K562 (cell line): ENCODE measurements at regions of chr20 and their contacts with region 1.

Region 1: GRCh38 chr20:35146920-35147574 is at the start of gene EDEM2:
- DNase-seq: peak; percentile 92 to 98 (median 94)
- ATAC-seq: peak; percentile 95
- H3K4me3 ChIP-seq: peak within 1 kb of the TSS; percentile 60
- H3K27ac ChIP-seq: peak within 1 kb of the TSS; percentile 74
- H3K4me1 ChIP-seq: peaks cover 14 to 15% of the 10 kb centered on the region in 2 experiments; a peak in 4 of 5 replicates
- H3K27me3 ChIP-seq: no peaks in the 10 kb centered on the region
- CTCF ChIP-seq: peak in 2 of 3 experiments; percentile 33 to 41; a peak in 4 of 6 replicates
- EP300 ChIP-seq: no peak; the same call in 1 of the 2 replicates
- POLR2A ChIP-seq: peak; percentile 84
- RAD21 ChIP-seq: peak in 1 of 2 experiments; percentile 36; a peak in 2 of 4 replicates
- polyA plus RNA-seq, gene EDEM2: 7.3 to 9.1 TPM

Region 2: DNA sequence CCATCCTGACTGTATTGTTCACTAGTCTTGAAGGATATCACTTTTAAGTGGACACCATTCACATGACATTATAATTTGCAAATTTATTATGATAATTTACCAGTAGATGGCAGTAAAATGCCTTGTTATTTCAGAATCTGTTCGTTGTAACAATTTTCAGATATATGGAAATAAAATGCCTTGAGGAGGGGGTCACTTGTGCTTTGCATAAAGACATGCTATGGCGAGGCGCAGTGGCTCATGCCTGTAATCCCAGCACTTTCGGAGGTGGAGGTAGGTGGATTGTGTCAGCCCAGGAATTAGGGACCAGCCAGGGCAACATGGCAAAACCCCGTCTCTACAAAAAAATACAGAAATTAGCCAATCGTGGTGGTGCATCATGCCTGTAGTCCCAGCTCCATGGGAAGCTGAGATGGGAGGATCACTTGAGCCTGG is 312.6 kb before region 1 on chr20:
- CTCF ChIA-PET with region 1: no interaction called
- POLR2A ChIA-PET with region 1: no interaction called
- in situ Hi-C with region 1: no loop called
- intact Hi-C with region 1: loop called (anchors 5 kb)
- DNase-seq: peak; percentile 28 to 43 (median 40)
- ATAC-seq: peak; percentile 71
- H3K4me3 ChIP-seq: no peak overlapping the region
- H3K27ac ChIP-seq: no peak overlapping the region
- H3K4me1 ChIP-seq: peaks cover 0 to 9% of the 10 kb centered on the region in 2 experiments; a peak in 3 of 5 replicates
- H3K27me3 ChIP-seq: no peaks in the 10 kb centered on the region
- CTCF ChIP-seq: peak in 2 of 3 experiments; percentile 48 to 57; a peak in 3 of 6 replicates
- EP300 ChIP-seq: no peak
- POLR2A ChIP-seq: no peak
- RAD21 ChIP-seq: peak; percentile 41 to 62

Region 3: GRCh38 chr20:35021063-35021462 is 126.0 kb before region 1 on chr20:
- CTCF ChIA-PET with region 1: no interaction called
- POLR2A ChIA-PET with region 1: no interaction called
- in situ Hi-C with region 1: no loop called
- intact Hi-C with region 1: no loop called
- DNase-seq: no peak
- ATAC-seq: no peak
- H3K4me3 ChIP-seq: no peak overlapping the region
- H3K27ac ChIP-seq: no peak overlapping the region
- H3K4me1 ChIP-seq: no peaks in the 10 kb centered on the region
- H3K27me3 ChIP-seq: no peaks in the 10 kb centered on the region
- CTCF ChIP-seq: no peak
- EP300 ChIP-seq: no peak
- POLR2A ChIP-seq: no peak
- RAD21 ChIP-seq: no peak

Region 4: GRCh38 chr20:35092524-35093266 is 54.4 kb before region 1 on chr20 and contains the start of gene TRPC4AP:
- CTCF ChIA-PET with region 1: interaction called, 4 read pairs
- POLR2A ChIA-PET with region 1: interaction called, 3 read pairs
- in situ Hi-C with region 1: no loop called
- intact Hi-C with region 1: loop called (anchors 2 kb)
- DNase-seq: peak; percentile 88 to 94 (median 88)
- ATAC-seq: peak; percentile 92
- H3K4me3 ChIP-seq: peak within 1 kb of the TSS; percentile 92
- H3K27ac ChIP-seq: peak within 1 kb of the TSS; percentile 93
- H3K4me1 ChIP-seq: peaks cover 15 to 18% of the 10 kb centered on the region in 2 experiments
- H3K27me3 ChIP-seq: no peaks in the 10 kb centered on the region
- CTCF ChIP-seq: peak; percentile 91 to 98 (median 96)
- EP300 ChIP-seq: peak; percentile 55
- POLR2A ChIP-seq: peak; percentile 88
- RAD21 ChIP-seq: peak; percentile 19 to 41; a peak in 1 of 4 replicates
- polyA plus RNA-seq, gene TRPC4AP: 2.3 to 3.6 TPM

Region 5: GRCh38 chr20:35166242-35166830 is 19.3 kb after region 1 on chr20:
- CTCF ChIA-PET with region 1: no interaction called
- POLR2A ChIA-PET with region 1: interaction called, 12 read pairs
- in situ Hi-C with region 1: no loop called
- intact Hi-C with region 1: no loop called
- DNase-seq: peak in 2 of 4 experiments; percentile 52 to 62
- ATAC-seq: peak; percentile 81
- H3K4me3 ChIP-seq: no peak overlapping the region
- H3K27ac ChIP-seq: no peak overlapping the region
- H3K4me1 ChIP-seq: peaks cover 6 to 8% of the 10 kb centered on the region in 2 experiments; a peak in 4 of 5 replicates
- H3K27me3 ChIP-seq: no peaks in the 10 kb centered on the region
- CTCF ChIP-seq: no peak
- EP300 ChIP-seq: no peak
- POLR2A ChIP-seq: no peak
- RAD21 ChIP-seq: no peak

Region 6: GRCh38 chr20:35207950-35208611 is 61.0 kb after region 1 on chr20:
- CTCF ChIA-PET with region 1: interaction called, 60 read pairs
- POLR2A ChIA-PET with region 1: interaction called, 4 read pairs
- in situ Hi-C with region 1: no loop called
- intact Hi-C with region 1: loop called (anchors 1 kb)
- DNase-seq: peak; percentile 59 to 90 (median 64)
- ATAC-seq: peak; percentile 98
- H3K4me3 ChIP-seq: no peak overlapping the region
- H3K27ac ChIP-seq: no peak overlapping the region
- H3K4me1 ChIP-seq: peaks cover 0 to 6% of the 10 kb centered on the region in 2 experiments; a peak in 2 of 5 replicates
- H3K27me3 ChIP-seq: no peaks in the 10 kb centered on the region
- CTCF ChIP-seq: peak; percentile 78 to 95 (median 79)
- EP300 ChIP-seq: peak; percentile 55
- POLR2A ChIP-seq: no peak
- RAD21 ChIP-seq: peak; percentile 98 to 99

Region 7: GRCh38 chr20:35447082-35447789 is 300.2 kb after region 1 on chr20:
- CTCF ChIA-PET with region 1: no interaction called
- POLR2A ChIA-PET with region 1: no interaction called
- in situ Hi-C with region 1: loop called (anchors 25 kb)
- intact Hi-C with region 1: loop called (anchors 2 kb)
- DNase-seq: peak; percentile 77 to 89 (median 80)
- ATAC-seq: peak; percentile 96
- H3K4me3 ChIP-seq: peak overlapping the region; percentile 15; the same call in 1 of the 2 replicates
- H3K27ac ChIP-seq: no peak overlapping the region
- H3K4me1 ChIP-seq: no peaks in the 10 kb centered on the region; a peak in 1 of 5 replicates
- H3K27me3 ChIP-seq: no peaks in the 10 kb centered on the region
- CTCF ChIP-seq: peak; percentile 86 to 90 (median 89)
- EP300 ChIP-seq: no peak
- POLR2A ChIP-seq: peak; percentile 47; the same call in 1 of the 2 replicates
- RAD21 ChIP-seq: peak; percentile 60 to 71

Region 8: DNA sequence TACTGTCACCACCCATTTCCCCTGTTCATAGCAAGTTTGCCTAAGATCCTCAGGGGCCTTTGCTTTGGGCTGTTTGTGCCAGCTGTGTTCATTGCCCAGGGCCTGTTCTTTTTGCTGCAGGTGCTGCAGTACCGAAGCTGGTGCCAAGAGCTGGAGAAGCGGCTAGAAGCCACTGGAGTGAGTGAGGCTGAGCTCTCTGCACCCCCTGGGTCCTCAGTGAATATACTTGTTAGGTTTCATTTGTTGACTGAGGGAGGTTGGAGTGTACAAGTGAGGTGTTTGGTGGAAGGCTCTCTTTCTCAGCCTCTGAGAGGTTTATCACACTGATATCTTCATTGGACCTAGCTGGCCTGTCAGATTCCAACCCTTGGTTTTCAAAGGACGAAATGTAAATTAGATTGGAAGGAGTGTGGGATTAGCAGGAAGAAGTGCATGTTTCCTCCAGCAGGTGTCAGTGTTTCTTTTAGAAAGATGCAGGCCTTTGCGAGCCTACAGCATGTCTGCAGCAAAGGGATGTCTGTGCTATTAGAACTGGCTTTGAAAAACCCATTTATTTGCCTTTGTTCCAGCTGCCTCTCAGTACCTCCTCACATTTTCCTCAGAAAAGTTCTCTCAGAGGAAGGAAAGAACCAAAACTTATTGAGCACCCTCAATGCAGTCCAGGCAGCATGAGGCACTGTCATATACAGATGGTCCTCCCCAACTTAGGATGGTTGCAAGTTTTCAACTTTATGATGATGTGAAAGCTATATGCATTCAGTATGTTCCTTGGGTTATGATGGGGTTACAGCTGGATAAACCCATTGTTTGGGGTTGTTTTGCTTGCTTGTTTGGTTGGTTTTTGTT is 316.6 kb after region 1 on chr20:
- CTCF ChIA-PET with region 1: no interaction called
- POLR2A ChIA-PET with region 1: no interaction called
- in situ Hi-C with region 1: no loop called
- intact Hi-C with region 1: no loop called
- DNase-seq: peak; percentile 42 to 82 (median 56)
- ATAC-seq: peak; percentile 85
- H3K4me3 ChIP-seq: no peak overlapping the region
- H3K27ac ChIP-seq: 0 out of 3 replicates have a peak overlapping the region, but pooled peaks have one; percentile 8
- H3K4me1 ChIP-seq: peaks cover 19 to 20% of the 10 kb centered on the region in 2 experiments
- H3K27me3 ChIP-seq: no peaks in the 10 kb centered on the region
- CTCF ChIP-seq: peak; percentile 60 to 89 (median 78)
- EP300 ChIP-seq: no peak
- POLR2A ChIP-seq: no peak
- RAD21 ChIP-seq: peak; percentile 57 to 64